ENCODE measurements at regions of chr17 and their contacts with region 1.

Region 1: GRCh38 chr17:45247429-45248131 is 14.3 kb downstream of the SPATA32 start:
- DNase-seq: peak; percentile 95
- H3K4me3 ChIP-seq: peak overlapping the region; percentile 65 to 80
- H3K27ac ChIP-seq: peak overlapping the region; percentile 44 to 86; a peak in 3 of 4 replicates
- H3K4me1 ChIP-seq: peaks cover 0 to 20% of the 10 kb centered on the region in 2 experiments; a peak in 1 of 4 replicates
- H3K27me3 ChIP-seq: no peaks in the 10 kb centered on the region
- CTCF ChIP-seq: no peak
- EP300 ChIP-seq: no peak
- RAD21 ChIP-seq: no peak

Region 2: DNA sequence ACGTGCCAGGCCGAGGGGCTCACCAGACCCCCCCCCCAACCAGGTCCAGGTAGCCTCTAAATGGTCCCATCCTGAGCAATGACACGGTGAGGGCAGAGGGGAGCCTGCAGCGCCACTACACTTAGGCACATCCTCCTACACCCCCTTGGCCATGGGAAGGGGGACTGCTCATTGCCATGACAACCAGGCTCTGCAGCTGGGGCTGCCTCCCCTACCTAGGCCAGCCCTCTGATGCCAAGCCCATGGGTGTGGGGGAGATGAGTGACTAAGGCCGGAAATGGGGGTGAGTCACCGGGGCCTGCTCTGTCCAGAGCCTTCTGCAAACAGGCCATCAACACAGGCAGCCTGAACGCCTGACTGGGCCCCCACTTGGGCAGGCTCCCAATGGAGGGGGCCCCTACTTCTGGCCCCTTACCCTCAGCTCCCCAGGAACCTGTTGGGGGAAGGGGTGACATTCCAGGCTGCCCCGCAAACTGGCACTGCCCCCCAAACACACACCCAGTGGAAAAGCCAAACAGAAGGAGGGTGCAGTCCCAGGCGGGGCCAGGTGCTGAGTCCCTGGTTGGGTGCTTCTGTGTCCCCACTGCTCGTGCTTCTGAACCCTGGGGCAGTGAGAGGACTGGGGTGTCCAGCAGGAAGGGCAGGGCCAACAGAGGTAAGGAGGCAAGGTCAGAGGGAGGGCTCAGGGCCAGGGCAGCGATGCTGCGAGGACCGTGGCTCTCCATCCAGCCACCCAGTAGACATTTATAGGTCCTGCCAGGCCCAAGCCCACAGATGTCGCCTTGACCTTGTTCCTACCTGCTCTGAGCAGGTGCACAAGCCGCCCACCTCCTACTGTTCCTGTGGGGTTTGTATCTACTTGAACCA is 123.4 kb before region 1 on chr17:
- CTCF ChIA-PET with region 1: no interaction called
- POLR2A ChIA-PET with region 1: no interaction called
- DNase-seq: peak; percentile 80
- H3K4me3 ChIP-seq: no peak overlapping the region
- H3K27ac ChIP-seq: peak overlapping the region; percentile 56 to 93
- H3K4me1 ChIP-seq: peaks cover 36 to 41% of the 10 kb centered on the region in 2 experiments; a peak in 3 of 4 replicates
- H3K27me3 ChIP-seq: no peaks in the 10 kb centered on the region
- CTCF ChIP-seq: no peak
- EP300 ChIP-seq: peak in 1 of 2 experiments; percentile 81; a peak in 2 of 4 replicates
- RAD21 ChIP-seq: no peak

Region 3: GRCh38 chr17:45228763-45229539 is 18.6 kb before region 1 on chr17:
- CTCF ChIA-PET with region 1: interaction called, 232 read pairs
- POLR2A ChIA-PET with region 1: no interaction called
- DNase-seq: no peak
- H3K4me3 ChIP-seq: no peak overlapping the region
- H3K27ac ChIP-seq: no peak overlapping the region
- H3K4me1 ChIP-seq: peaks cover 4 to 23% of the 10 kb centered on the region in 2 experiments; a peak in 2 of 4 replicates
- H3K27me3 ChIP-seq: no peaks in the 10 kb centered on the region
- CTCF ChIP-seq: no peak
- EP300 ChIP-seq: no peak
- RAD21 ChIP-seq: no peak

Region 4: DNA sequence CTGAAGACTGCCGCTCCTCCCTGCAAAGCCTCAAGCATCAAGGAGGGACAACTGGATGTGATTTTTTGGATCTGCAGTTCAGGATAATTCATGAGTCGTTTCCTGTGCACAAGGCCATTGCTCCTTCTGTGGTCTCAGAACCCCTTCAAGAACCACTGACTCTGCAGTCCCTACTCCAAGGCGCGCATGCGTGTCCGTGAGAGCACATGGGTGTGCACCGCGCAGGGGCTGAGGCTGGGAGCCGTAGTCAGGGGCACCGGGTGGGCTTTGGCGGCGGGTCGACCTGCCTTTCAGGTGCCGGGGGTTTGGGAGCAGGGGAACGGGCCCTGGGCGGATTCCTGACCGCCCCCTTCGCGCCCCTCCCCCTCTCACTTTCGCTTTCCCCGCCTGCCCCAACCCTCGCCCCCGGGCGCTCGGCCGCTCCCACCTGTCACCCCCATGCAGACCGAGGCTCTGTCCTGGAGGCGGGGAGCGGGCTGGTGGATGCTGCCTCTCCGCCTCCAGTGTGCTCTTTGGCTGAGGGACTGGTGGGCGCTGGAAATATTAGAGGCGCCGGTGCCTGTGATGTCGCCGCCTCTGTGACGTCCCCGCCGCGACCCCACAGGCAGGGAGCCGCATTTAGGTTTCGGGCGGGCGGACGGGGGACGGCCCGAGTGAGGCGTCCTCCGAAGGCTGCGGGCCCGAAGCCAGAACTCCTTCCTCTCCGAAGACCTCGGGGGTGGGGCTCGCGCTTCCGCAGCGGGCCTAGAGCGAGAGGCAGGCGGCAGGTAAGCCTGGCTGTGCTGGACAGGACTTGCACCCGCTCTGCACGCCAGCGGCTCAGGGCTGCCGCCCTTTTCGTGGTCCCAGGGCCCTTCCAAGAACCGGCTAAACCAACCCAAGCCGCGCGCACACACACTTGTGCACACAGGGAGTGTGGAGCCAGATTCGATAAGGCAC is 14.3 kb after region 1 on chr17 and contains the start of gene SPATA32:
- CTCF ChIA-PET with region 1: interaction called, 15 read pairs
- POLR2A ChIA-PET with region 1: no interaction called
- DNase-seq: peak; percentile 71
- H3K4me3 ChIP-seq: peak within 1 kb of the TSS in 1 of 2 experiments; percentile 16; a peak in 1 of 4 replicates
- H3K27ac ChIP-seq: no peak within 1 kb of the TSS; a peak in 1 of 4 replicates
- H3K4me1 ChIP-seq: peaks cover 0 to 9% of the 10 kb centered on the region in 2 experiments; a peak in 3 of 4 replicates
- H3K27me3 ChIP-seq: no peaks in the 10 kb centered on the region
- CTCF ChIP-seq: no peak
- EP300 ChIP-seq: no peak
- RAD21 ChIP-seq: no peak
- polyA plus RNA-seq, gene SPATA32: 0.08 TPM in 1 of 2 replicates, not detected in the other

Region 5: GRCh38 chr17:45307290-45308015 is 59.9 kb after region 1 on chr17:
- CTCF ChIA-PET with region 1: interaction called, 15 read pairs
- POLR2A ChIA-PET with region 1: no interaction called
- DNase-seq: no peak
- H3K4me3 ChIP-seq: no peak overlapping the region
- H3K27ac ChIP-seq: peak overlapping the region; percentile 48 to 98; a peak in 3 of 4 replicates
- H3K4me1 ChIP-seq: peaks cover 27 to 48% of the 10 kb centered on the region in 2 experiments
- H3K27me3 ChIP-seq: no peaks in the 10 kb centered on the region
- CTCF ChIP-seq: no peak
- EP300 ChIP-seq: peak in 1 of 2 experiments; percentile 68; a peak in 2 of 4 replicates
- RAD21 ChIP-seq: no peak

Region 6: DNA sequence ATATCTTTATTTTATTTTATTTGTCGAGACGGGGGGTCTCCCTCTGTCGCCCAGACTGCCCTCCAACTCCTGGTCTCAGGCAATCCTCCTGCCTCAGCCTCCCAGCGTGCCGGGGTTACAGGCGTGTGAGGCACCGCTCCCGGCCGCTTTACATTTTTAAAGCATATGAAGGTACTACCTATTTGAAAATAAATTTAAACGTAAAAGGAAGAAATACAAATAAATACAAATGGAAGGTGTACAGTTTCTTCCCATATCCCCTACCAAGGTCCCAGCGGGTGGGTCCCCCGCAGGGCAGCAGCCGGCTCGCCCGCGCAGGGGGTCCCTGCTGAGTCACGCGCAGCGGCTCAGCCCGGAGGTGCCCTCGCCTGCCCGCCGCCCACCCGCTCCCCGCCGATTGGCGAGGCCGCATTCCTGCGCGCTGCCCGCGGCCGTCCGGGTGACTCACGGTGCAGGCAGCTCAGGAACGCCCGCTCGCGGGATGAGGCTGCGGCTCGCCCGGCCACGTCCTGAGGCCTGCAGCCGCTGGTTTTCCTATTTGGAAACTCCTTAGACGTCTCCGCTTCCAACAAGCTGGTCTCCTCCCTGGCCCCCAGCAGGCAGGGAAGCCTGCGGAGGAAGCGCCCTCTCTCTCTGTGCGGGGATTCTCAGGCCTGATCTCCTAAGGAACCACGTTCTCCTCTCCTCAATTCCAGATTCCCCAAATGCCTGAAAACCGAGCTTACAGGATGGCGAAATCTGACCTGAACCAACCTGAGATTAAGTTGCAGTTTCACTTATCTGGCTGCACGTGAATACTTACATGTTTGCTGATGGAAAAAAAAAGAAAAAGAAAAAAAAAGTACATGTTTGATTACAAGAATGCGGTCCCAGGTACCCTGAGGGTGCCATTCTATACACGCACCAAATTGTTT is 124.1 kb after region 1 on chr17:
- CTCF ChIA-PET with region 1: interaction called, 13 read pairs
- POLR2A ChIA-PET with region 1: no interaction called
- DNase-seq: peak; percentile 78
- H3K4me3 ChIP-seq: peak overlapping the region; percentile 1 to 43; a peak in 1 of 4 replicates
- H3K27ac ChIP-seq: peak overlapping the region; percentile 78 to 96
- H3K4me1 ChIP-seq: peaks cover 2 to 31% of the 10 kb centered on the region in 2 experiments; a peak in 3 of 4 replicates
- H3K27me3 ChIP-seq: no peaks in the 10 kb centered on the region
- CTCF ChIP-seq: no peak; the same call in none of the 2 replicates
- EP300 ChIP-seq: peak in 1 of 2 experiments; percentile 94; a peak in 3 of 4 replicates
- RAD21 ChIP-seq: no peak